ENCODE measurements at regions of chr12 and their contacts with region 1.

Region 1: DNA sequence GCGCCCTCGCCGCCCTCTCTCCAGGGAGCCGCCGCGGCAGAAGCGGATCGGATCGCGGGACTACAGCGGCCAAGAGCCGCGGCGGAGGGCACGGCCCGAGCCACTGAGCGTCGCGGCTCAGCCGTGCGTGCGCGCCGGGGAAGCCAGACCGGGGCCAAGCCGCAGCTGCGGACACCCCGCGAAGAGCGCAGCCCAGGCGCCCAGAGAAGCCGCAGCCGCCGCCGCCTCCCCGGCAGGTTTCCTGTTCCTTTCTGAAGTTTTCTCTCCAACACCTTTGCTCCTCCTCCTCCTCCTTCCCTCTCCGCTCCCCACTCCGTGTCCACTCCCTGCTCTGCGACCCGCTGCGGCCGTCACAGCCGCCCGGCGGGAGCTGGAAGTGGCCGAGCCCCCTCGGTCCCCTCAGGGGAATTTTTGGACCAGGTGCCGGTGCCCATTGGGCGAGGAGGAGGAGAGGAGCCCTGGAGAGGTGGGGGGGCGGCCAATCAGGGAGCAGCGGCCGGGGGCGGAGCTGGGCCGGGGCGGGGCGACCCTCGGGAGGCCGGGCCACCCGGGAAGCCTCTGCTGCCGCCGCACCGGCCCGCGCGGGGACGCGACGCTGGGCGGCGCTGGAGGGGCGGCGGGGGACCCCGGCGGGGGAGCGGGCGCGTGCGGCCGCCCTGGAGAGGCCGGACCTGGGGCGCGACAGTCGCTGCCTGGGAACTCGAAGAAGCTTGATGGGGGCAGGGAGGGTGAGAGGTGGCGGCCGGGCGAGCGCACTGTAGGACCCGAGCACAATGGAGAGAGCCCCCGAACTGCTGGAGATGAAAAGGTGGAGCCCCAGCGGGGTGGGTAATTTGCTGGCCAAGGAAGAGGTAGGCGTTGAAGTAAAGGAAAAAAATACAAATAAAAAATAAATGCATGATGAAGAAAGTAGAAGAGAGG is at the start of gene ITPR2:
- DNase-seq: peak; percentile 96 to 97
- ATAC-seq: peak; percentile 97
- H3K4me3 ChIP-seq: peak within 1 kb of the TSS; percentile 65 to 87
- H3K27ac ChIP-seq: peak within 1 kb of the TSS; percentile 2 to 96
- H3K4me1 ChIP-seq: no peaks in the 10 kb centered on the region
- H3K27me3 ChIP-seq: no peaks in the 10 kb centered on the region
- total RNA-seq, gene ITPR2: 40.3 to 84.8 TPM

Region 2: DNA sequence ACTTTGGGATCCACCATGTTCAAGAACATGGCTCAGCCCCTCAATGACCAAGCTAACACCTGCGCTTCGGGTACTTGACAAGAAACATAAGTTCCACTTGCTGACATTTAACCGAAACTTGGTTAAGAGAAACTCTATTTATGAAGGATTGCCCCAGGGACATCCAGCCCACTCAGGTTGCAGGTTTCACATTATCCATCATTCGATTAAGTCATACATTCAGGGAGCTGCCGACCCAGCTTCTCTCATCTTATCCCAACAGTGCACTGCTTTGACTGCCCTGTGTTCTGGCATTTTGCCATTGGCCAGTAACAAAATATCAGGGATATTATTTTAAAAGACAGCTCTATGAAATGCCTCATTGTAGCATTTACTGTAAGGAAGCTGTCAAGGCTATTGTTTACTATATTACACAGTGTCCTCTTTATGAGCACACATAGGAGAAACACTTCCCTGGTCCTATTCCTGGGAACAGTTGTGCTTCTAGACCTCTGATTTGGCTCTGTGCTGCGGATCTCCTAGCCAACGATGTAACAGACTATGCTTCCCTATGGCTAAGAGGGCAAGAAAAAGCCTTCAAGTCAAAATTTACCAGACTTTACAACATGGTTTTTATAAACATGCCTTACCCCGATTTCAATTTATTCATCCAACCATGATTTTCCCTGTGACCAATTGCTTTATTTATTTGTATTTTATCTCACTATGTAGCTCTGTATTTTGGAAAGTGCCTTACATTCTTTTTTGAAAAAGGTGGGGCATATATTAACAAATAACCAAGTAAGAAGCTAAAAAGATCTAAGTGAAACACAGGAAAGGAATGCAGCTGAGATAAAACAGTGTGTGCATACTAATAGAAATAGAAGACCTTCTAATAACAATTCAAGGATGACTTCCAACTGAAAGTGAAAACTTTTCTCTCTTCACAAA is 109.4 kb before region 1 on chr12:
- intact Hi-C with region 1: loop called in 1 of 2 experiments (anchors 5 kb)
- DNase-seq: peak in 1 of 2 donors; percentile 56
- ATAC-seq: peak; percentile 56
- H3K4me3 ChIP-seq: peak overlapping the region in 1 of 2 donors; percentile 41
- H3K27ac ChIP-seq: peak overlapping the region in 1 of 2 donors; percentile 92
- H3K4me1 ChIP-seq: peaks cover 6 to 7% of the 10 kb centered on the region in 2 donors
- H3K27me3 ChIP-seq: no peaks in the 10 kb centered on the region

Region 3: GRCh38 chr12:26786865-26787514 is 46.1 kb before region 1 on chr12:
- intact Hi-C with region 1: loop called in 1 of 2 experiments (anchors 5 kb)
- DNase-seq: no peak
- ATAC-seq: peak; percentile 75
- H3K4me3 ChIP-seq: no peak overlapping the region
- H3K27ac ChIP-seq: peak overlapping the region in 1 of 2 donors; percentile 67
- H3K4me1 ChIP-seq: peaks cover 0 to 5% of the 10 kb centered on the region in 2 donors
- H3K27me3 ChIP-seq: no peaks in the 10 kb centered on the region

Region 4: DNA sequence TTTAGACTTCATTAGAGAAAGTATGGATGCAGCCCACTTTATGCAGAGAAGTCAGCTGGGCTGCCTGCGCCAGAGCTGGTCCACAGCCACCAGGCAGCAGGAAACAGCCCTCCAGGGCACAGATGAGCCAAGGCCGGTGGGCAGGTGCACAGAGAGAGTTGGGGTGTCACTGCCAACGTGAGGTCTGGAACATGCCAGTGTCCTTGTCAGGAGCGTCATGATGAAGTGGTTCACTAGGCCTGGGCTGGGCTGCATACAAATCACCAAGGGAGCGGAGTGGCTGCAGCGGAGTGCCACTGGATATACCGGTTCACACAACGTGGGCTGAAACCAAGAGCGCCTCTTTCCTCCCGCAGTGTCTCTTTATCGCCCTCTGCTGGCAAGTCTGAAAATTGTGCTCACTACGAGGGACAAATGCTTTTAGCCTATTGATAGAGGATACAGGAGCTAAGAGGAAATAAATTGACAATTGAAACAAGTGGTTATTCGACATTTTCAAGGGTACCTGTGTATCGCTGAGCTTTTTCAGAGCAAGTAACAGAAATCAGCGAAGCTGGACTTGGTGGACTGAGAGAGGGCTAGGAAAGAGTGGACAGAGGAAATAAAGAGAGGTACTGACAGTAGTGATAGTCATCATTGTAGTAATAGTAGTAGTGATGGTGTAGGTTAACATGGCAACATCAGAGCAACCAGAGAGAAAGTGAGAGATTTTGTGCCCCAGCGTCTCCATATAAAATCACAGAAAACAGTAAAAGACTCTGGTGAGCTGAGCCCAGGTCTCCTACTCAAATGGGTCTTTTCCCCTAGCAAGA is 51.9 kb after region 1 on chr12:
- intact Hi-C with region 1: no loop called
- DNase-seq: peak; percentile 83 to 85
- ATAC-seq: peak; percentile 92
- H3K4me3 ChIP-seq: no peak overlapping the region
- H3K27ac ChIP-seq: no peak overlapping the region
- H3K4me1 ChIP-seq: no peaks in the 10 kb centered on the region
- H3K27me3 ChIP-seq: no peaks in the 10 kb centered on the region